T-cell (primary cell): ENCODE measurements at regions of chr12 and their contacts with region 1.

Region 1: GRCh38 chr12:14664510-14664909 is 31.9 kb downstream of the GUCY2C start:
- DNase-seq: peak in 26 of 35 experiments; percentile 4 to 71 (median 22)
- ATAC-seq: peak; percentile 54 to 83 (median 60)
- H3K4me3 ChIP-seq: no peak overlapping the region
- H3K4me3 Mint-ChIP-seq: no peak overlapping the region
- H3K27ac ChIP-seq: no peak overlapping the region
- H3K27ac Mint-ChIP-seq: no peak overlapping the region
- H3K4me1 ChIP-seq: no peaks in the 10 kb centered on the region
- H3K4me1 Mint-ChIP-seq: peaks cover 6 to 13% (median 6%) of the 10 kb centered on the region in 3 donors
- H3K27me3 ChIP-seq: no peaks in the 10 kb centered on the region
- H3K27me3 Mint-ChIP-seq: peaks cover 2 to 6% of the 10 kb centered on the region in 2 donors

Region 2: GRCh38 chr12:14577344-14577743 is 87.2 kb before region 1 on chr12:
- CTCF ChIA-PET with region 1: interaction called in 1 of 2 experiments, 12 read pairs
- POLR2A ChIA-PET with region 1: no interaction called
- DNase-seq: peak in 5 of 35 experiments; percentile 4 to 67 (median 7)
- ATAC-seq: peak; percentile 58 to 95 (median 78)
- H3K4me3 ChIP-seq: no peak overlapping the region
- H3K4me3 Mint-ChIP-seq: peak overlapping the region in 1 of 3 donors; percentile 26
- H3K27ac ChIP-seq: no peak overlapping the region
- H3K27ac Mint-ChIP-seq: no peak overlapping the region
- H3K4me1 ChIP-seq: peaks cover 0 to 15% of the 10 kb centered on the region in 2 experiments
- H3K4me1 Mint-ChIP-seq: peaks cover 22 to 27% (median 25%) of the 10 kb centered on the region in 3 donors
- H3K27me3 ChIP-seq: peaks cover 0 to 3% of the 10 kb centered on the region in 2 experiments
- H3K27me3 Mint-ChIP-seq: no peaks in the 10 kb centered on the region

Region 3: DNA sequence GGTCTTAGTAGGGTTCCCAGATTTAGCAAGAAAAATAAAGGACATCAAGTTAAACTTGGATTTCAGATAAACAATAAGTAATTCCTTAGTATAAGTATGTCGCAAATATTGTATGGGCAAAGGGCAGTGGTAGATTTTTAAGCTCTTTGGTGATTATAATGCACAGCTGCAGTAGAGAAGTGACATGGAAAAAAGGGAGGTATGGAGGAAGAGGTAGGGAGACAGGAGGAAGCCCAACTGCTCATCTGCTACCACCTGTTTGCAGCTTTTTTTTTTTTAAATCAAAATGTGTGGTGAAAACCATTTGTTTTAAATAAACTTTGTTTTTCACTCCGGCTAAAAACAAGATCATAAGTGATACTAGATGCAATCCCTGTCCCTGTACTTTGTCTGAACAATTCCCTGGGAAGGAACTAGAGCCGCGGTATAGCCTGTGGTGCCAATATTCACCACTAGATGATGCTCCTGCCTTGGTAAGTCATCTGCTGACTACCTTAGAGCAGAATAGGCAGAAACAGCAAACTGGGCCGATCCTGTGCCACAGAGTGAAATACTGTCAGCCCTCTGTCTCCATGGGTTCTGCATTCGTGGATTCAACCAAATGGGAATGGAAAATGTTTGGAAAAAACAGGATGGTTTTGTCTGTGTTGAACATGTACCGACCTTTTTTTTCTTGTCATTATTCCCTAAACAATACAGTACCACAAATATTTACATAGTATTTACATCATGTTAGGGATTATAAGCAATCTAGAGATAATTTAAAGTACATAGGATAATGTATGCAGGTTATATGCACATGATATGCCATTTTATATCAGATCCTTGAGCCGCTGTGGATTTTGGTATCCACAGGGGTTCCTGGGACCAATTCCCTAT is 34.4 kb before region 1 on chr12:
- CTCF ChIA-PET with region 1: interaction called, 14 to 21 read pairs
- POLR2A ChIA-PET with region 1: no interaction called
- DNase-seq: peak; percentile 13 to 79 (median 47)
- ATAC-seq: peak; percentile 90 to 99 (median 95)
- H3K4me3 ChIP-seq: no peak overlapping the region
- H3K4me3 Mint-ChIP-seq: no peak overlapping the region
- H3K27ac ChIP-seq: no peak overlapping the region
- H3K27ac Mint-ChIP-seq: no peak overlapping the region
- H3K4me1 ChIP-seq: no peaks in the 10 kb centered on the region
- H3K4me1 Mint-ChIP-seq: no peaks in the 10 kb centered on the region
- H3K27me3 ChIP-seq: peaks cover 0 to 6% of the 10 kb centered on the region in 2 experiments
- H3K27me3 Mint-ChIP-seq: no peaks in the 10 kb centered on the region

Region 4: GRCh38 chr12:14638066-14638465 is 26.4 kb before region 1 on chr12:
- CTCF ChIA-PET with region 1: interaction called in 1 of 2 experiments, 4 read pairs
- POLR2A ChIA-PET with region 1: interaction called in 1 of 2 experiments, 15 read pairs
- DNase-seq: no peak
- ATAC-seq: no peak
- H3K4me3 ChIP-seq: no peak overlapping the region
- H3K4me3 Mint-ChIP-seq: no peak overlapping the region
- H3K27ac ChIP-seq: no peak overlapping the region
- H3K27ac Mint-ChIP-seq: no peak overlapping the region
- H3K4me1 ChIP-seq: peaks cover under 1 to 9% of the 10 kb centered on the region in 2 experiments
- H3K4me1 Mint-ChIP-seq: peaks cover 8 to 10% (median 8%) of the 10 kb centered on the region in 3 donors
- H3K27me3 ChIP-seq: peaks cover 0 to under 1% of the 10 kb centered on the region in 2 experiments
- H3K27me3 Mint-ChIP-seq: no peaks in the 10 kb centered on the region